ENCODE measurements at regions of chr7 and their contacts with region 1.

Region 1: GRCh38 chr7:94449148-94449725 is 54.5 kb downstream of the COL1A2 start:
- DNase-seq: no peak
- ATAC-seq: no peak; the same call in 1 of the 2 replicates
- H3K4me3 Mint-ChIP-seq: no peak overlapping the region
- H3K27ac Mint-ChIP-seq: no peak overlapping the region
- H3K4me1 Mint-ChIP-seq: peaks cover 13% of the 10 kb centered on the region
- H3K27me3 Mint-ChIP-seq: no peaks in the 10 kb centered on the region
- CTCF ChIP-seq: 0 out of 2 replicates have a peak, but pooled peaks have one; percentile 22

Region 2: GRCh38 chr7:94436018-94436604 is 13.1 kb before region 1 on chr7:
- CTCF ChIA-PET with region 1: interaction called, 14 read pairs
- POLR2A ChIA-PET with region 1: no interaction called
- DNase-seq: peak; percentile 67
- ATAC-seq: peak; percentile 87
- H3K4me3 Mint-ChIP-seq: no peak overlapping the region
- H3K27ac Mint-ChIP-seq: no peak overlapping the region
- H3K4me1 Mint-ChIP-seq: peaks cover 21% of the 10 kb centered on the region
- H3K27me3 Mint-ChIP-seq: no peaks in the 10 kb centered on the region
- CTCF ChIP-seq: peak; percentile 68

Region 3: DNA sequence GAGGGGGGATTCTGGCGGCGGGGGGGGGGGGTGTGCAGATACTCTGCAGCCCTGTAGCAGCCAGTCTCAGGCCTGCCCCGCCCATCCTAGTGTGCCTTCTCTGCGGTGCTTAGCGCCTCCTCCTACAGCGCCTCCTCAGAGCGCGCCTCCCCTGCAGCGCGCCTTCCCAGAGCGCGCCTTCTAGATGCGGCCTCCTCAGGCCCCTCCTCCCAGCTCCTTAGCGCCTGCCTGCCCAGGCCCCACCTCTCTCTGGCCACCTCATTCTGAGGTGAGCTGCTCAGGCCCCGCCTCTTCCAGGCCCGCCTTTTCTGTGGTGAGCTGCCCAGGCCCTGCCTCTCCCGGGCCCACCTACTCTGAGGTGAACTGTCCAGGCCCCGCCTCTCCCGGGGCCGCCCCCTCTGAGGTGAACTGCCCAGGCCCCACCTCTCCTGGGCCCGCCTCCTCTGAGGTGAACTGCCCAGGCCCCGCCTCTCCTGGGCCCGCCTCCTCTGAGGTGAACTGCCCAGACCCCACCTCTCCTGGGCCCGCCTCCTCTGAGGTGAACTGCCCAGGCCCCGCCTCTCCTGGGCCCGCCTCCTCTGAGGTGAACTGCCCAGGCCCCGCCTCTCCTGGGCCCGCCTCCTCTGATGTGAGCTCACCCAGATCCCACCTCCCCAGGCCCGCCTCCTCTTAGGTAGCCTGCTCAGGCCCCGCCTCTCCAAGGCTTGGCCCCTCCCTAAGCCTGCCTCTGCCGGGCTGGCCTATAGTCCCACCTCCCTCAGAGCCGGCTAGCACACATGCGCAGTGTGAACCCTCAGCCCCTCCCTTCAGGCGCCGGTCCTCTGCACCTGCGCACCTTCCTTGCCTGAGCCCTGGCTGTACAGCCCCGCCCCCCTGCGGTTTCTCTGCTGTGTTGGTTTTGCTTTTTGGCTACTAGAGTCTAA is 208.8 kb after region 1 on chr7:
- CTCF ChIA-PET with region 1: interaction called, 21 read pairs
- POLR2A ChIA-PET with region 1: interaction called, 5 read pairs
- DNase-seq: peak; percentile 96
- ATAC-seq: peak; percentile 86
- H3K4me3 Mint-ChIP-seq: peak overlapping the region; percentile 91
- H3K27ac Mint-ChIP-seq: peak overlapping the region; percentile 94; the same call in 1 of the 2 replicates
- H3K4me1 Mint-ChIP-seq: peaks cover 21% of the 10 kb centered on the region
- H3K27me3 Mint-ChIP-seq: peaks cover 16% of the 10 kb centered on the region
- CTCF ChIP-seq: no peak

Region 4: GRCh38 chr7:95246831-95247370 is 797.7 kb after region 1 on chr7:
- CTCF ChIA-PET with region 1: interaction called, 17 read pairs
- POLR2A ChIA-PET with region 1: no interaction called
- DNase-seq: peak; percentile 40
- ATAC-seq: peak; percentile 87
- H3K4me3 Mint-ChIP-seq: peak overlapping the region; percentile 43
- H3K27ac Mint-ChIP-seq: no peak overlapping the region; the same call in 1 of the 2 replicates
- H3K4me1 Mint-ChIP-seq: peaks cover 24% of the 10 kb centered on the region
- H3K27me3 Mint-ChIP-seq: no peaks in the 10 kb centered on the region
- CTCF ChIP-seq: peak; percentile 56

Region 5: DNA sequence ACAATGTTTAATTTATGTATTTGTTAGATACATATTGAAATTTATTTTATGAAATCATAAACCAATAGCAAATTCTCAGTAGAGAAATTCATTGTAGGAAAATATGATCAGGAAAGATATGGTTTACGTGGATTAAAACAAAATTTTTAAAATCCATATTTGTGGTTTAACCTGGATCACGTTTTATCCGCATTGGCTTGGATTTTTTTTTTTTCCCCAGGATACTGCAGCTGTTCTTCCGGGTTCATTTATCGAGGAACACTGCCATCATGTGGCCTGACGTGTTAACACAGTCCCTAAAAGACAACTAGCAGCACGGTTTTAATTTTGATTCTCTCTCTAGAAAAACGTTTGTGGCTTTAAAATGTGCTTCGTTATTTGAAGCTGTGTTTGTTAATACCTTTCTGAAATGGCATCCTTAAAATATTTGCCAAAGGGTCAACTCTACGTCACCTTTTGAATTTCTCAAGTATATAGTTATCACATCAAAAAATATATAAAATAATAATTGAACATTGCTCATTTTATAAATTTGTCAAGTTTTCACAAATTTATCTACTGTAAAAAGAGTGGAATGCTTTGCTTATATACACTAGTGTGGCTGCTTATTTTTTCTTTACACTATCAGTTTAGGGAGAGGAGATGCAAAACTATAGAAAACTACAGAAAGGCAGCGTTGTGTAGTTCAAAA is 1027.8 kb after region 1 on chr7:
- CTCF ChIA-PET with region 1: interaction called, 14 read pairs
- POLR2A ChIA-PET with region 1: no interaction called
- DNase-seq: peak; percentile 58
- ATAC-seq: peak; percentile 36
- H3K4me3 Mint-ChIP-seq: no peak overlapping the region; the same call in 1 of the 2 replicates
- H3K27ac Mint-ChIP-seq: no peak overlapping the region
- H3K4me1 Mint-ChIP-seq: peaks cover 20% of the 10 kb centered on the region
- H3K27me3 Mint-ChIP-seq: no peaks in the 10 kb centered on the region
- CTCF ChIP-seq: no peak